A673 (cell line): ENCODE measurements at regions of chr16 and their contacts with region 1.

Region 1: GRCh38 chr16:52581530-52581929 is 34.6 kb upstream of the TOX3 start:
- DNase-seq: peak; percentile 58
- H3K4me3 ChIP-seq: no peak overlapping the region
- H3K27ac ChIP-seq: no peak overlapping the region
- H3K4me1 ChIP-seq: no peaks in the 10 kb centered on the region
- H3K27me3 ChIP-seq: no peaks in the 10 kb centered on the region
- CTCF ChIP-seq: peak; percentile 62

Region 2: GRCh38 chr16:52603029-52603428 is 21.5 kb after region 1 on chr16:
- CTCF ChIA-PET with region 1: no interaction called
- POLR2A ChIA-PET with region 1: interaction called, 14 read pairs
- intact Hi-C with region 1: no loop called
- DNase-seq: no peak
- H3K4me3 ChIP-seq: no peak overlapping the region
- H3K27ac ChIP-seq: no peak overlapping the region
- H3K4me1 ChIP-seq: no peaks in the 10 kb centered on the region
- H3K27me3 ChIP-seq: peaks cover 5% of the 10 kb centered on the region
- CTCF ChIP-seq: no peak

Region 3: DNA sequence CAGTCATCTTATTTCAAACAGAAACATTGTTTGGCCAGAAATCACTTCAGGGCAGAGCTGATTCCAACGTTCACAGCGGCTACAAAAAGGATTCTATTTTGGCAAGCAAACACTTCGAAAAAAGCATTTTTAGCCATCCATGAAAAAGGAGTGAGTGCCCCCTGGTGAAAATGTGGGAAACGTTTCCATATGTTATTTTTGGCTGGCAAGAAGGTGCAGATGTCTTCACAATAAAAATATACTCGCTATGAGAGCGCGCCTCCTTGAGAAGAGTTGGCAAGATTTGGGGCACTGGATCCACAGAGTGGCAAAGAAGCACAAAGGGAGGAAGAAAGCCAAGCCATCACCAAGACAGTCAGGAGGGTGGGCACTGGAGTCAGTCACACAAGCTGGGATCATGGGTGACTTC is 280.1 kb after region 1 on chr16:
- CTCF ChIA-PET with region 1: interaction called, 6 read pairs
- POLR2A ChIA-PET with region 1: no interaction called
- intact Hi-C with region 1: loop called (anchors 10 kb)
- DNase-seq: peak; percentile 80
- H3K4me3 ChIP-seq: no peak overlapping the region
- H3K27ac ChIP-seq: no peak overlapping the region
- H3K4me1 ChIP-seq: peaks cover 4% of the 10 kb centered on the region
- H3K27me3 ChIP-seq: peaks cover 24% of the 10 kb centered on the region
- CTCF ChIP-seq: peak; percentile 71